CD4-positive, alpha-beta memory T cell (primary cell): ENCODE measurements at regions of chr9 and their contacts with region 1.

Region 1: DNA sequence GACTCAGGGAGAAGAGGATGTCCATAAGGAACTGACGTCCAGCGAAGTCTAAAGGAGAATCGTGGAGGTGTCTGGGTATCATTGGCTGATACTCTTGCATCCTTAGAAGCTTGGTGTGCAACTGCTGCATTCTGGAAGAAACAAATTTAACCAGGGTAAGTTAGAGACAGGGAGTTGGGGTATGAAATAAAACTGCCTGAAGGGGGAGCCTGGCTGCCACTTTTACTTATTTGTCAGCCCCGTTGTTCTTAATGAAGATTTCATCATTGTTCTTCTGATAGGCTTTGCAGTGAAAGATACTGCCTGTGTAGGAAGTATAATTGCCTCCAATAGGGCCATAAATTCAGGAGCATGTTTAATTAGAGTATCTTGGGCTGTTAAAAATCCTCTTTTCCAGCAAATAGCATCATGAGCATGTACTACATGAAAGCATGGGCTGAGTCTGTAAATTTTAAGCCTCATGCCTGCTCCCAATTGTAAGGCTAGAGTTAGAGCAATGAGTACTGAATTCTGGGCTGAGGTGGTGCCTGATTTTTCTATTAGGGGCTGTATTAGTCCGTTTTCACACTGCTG is 1264.5 kb upstream of the ACO1 start:
- DNase-seq: peak; percentile 40 to 62 (median 56)
- H3K4me3 ChIP-seq: no peak overlapping the region
- H3K4me3 Mint-ChIP-seq: no peak overlapping the region
- H3K27ac ChIP-seq: no peak overlapping the region
- H3K27ac Mint-ChIP-seq: peak overlapping the region in 2 of 7 donors; percentile 35 to 61
- H3K4me1 ChIP-seq: no peaks in the 10 kb centered on the region
- H3K4me1 Mint-ChIP-seq: peaks cover 5 to 13% (median 9%) of the 10 kb centered on the region in 4 donors
- H3K27me3 ChIP-seq: no peaks in the 10 kb centered on the region
- H3K27me3 Mint-ChIP-seq: no peaks in the 10 kb centered on the region

Region 2: DNA sequence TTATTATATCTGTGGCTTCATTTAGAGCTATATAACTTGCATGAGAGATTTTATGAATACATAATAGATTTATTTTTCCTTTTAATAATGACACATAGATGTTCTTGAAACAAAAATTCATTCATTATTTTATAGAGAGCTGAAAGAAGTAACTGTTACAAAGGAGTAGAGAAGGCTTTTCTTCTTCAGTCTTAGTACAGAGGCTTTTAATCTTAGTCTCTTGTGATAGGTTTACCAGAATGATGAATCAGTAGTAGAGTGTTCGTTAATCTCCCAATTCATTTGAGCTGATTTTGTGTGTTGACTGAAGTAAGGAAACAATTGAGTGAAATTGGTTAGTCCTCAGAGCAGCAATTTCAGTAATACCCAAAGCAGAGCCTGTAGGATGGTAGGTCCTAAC is 19.7 kb before region 1 on chr9:
- CTCF ChIA-PET with region 1: no interaction called
- POLR2A ChIA-PET with region 1: no interaction called
- intact Hi-C with region 1: no loop called
- DNase-seq: no peak
- H3K4me3 ChIP-seq: no peak overlapping the region
- H3K4me3 Mint-ChIP-seq: no peak overlapping the region
- H3K27ac ChIP-seq: no peak overlapping the region
- H3K27ac Mint-ChIP-seq: no peak overlapping the region
- H3K4me1 ChIP-seq: no peaks in the 10 kb centered on the region
- H3K4me1 Mint-ChIP-seq: peaks cover 0 to 1% (median 0%) of the 10 kb centered on the region in 4 donors
- H3K27me3 ChIP-seq: no peaks in the 10 kb centered on the region
- H3K27me3 Mint-ChIP-seq: peaks cover 0 to 1% of the 10 kb centered on the region in 2 donors

Region 3: DNA sequence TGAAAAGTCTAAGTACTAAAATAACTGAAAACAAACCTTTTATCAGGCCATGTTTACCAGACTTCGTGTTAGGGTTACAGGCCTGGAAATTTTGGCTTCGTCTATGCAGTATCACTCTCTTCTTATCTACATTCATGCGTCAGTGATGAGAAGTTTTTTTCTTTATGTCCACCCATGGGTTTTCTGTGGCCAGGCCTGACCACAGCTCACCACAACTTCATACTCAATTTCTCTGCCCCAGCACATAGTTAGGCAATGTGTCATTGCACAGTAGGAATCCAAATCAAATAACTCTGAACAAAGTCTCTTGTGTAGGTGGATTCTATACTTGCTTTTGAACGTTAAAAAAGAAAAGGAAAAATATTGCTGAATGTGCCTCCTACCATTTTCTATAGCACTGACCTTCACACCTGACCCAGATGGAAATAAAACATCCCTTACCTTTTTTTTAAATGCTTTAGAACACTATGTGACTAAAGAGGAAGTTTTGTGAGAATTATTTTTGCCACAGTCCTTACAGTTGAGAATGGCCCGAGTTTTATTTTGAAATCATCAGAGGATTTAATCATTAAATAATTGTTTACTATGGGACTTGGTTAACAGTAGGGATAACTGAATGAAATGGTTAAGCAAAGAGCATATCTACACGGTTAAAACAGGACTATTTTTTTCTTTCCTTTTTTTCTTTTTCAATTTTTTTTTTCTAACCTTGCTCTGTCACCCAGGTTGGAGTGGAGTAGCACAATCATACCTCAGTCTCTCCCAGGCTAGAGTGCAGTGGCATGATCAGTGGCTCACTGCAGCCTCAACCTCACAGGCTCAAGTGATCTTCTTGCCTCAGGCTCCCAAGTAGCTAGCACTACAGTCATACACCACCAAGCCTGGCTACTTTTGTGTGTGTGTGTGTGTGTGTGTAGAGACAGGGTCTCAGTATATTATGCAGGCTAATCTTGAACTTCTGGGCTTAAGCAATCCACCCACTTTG is 17.5 kb after region 1 on chr9:
- CTCF ChIA-PET with region 1: no interaction called
- POLR2A ChIA-PET with region 1: no interaction called
- intact Hi-C with region 1: no loop called
- DNase-seq: no peak
- H3K4me3 ChIP-seq: no peak overlapping the region
- H3K4me3 Mint-ChIP-seq: no peak overlapping the region
- H3K27ac ChIP-seq: no peak overlapping the region
- H3K27ac Mint-ChIP-seq: no peak overlapping the region
- H3K4me1 ChIP-seq: no peaks in the 10 kb centered on the region
- H3K4me1 Mint-ChIP-seq: peaks cover 0 to 9% (median 8%) of the 10 kb centered on the region in 4 donors
- H3K27me3 ChIP-seq: no peaks in the 10 kb centered on the region
- H3K27me3 Mint-ChIP-seq: no peaks in the 10 kb centered on the region

Region 4: GRCh38 chr9:31304576-31304975 is 184.6 kb after region 1 on chr9:
- CTCF ChIA-PET with region 1: interaction called, 18 read pairs
- POLR2A ChIA-PET with region 1: no interaction called
- intact Hi-C with region 1: loop called (anchors 1 kb)
- DNase-seq: no peak
- H3K4me3 ChIP-seq: no peak overlapping the region
- H3K4me3 Mint-ChIP-seq: no peak overlapping the region
- H3K27ac ChIP-seq: no peak overlapping the region
- H3K27ac Mint-ChIP-seq: no peak overlapping the region
- H3K4me1 ChIP-seq: peaks cover 25% of the 10 kb centered on the region
- H3K4me1 Mint-ChIP-seq: peaks cover 21 to 32% (median 26%) of the 10 kb centered on the region in 4 donors
- H3K27me3 ChIP-seq: no peaks in the 10 kb centered on the region
- H3K27me3 Mint-ChIP-seq: no peaks in the 10 kb centered on the region

Region 5: GRCh38 chr9:31542384-31543055 is 422.6 kb after region 1 on chr9:
- CTCF ChIA-PET with region 1: interaction called, 32 read pairs
- POLR2A ChIA-PET with region 1: no interaction called
- intact Hi-C with region 1: loop called (anchors 1 kb)
- DNase-seq: peak; percentile 36 to 46 (median 40)
- H3K4me3 ChIP-seq: no peak overlapping the region
- H3K4me3 Mint-ChIP-seq: peak overlapping the region in 7 of 8 donors; percentile 32 to 72 (median 52)
- H3K27ac ChIP-seq: no peak overlapping the region
- H3K27ac Mint-ChIP-seq: peak overlapping the region in 5 of 7 donors; percentile 3 to 89 (median 88)
- H3K4me1 ChIP-seq: peaks cover 19% of the 10 kb centered on the region
- H3K4me1 Mint-ChIP-seq: peaks cover 17 to 22% (median 19%) of the 10 kb centered on the region in 4 donors
- H3K27me3 ChIP-seq: no peaks in the 10 kb centered on the region
- H3K27me3 Mint-ChIP-seq: no peaks in the 10 kb centered on the region

Region 6: GRCh38 chr9:31799953-31800609 is 680.1 kb after region 1 on chr9:
- CTCF ChIA-PET with region 1: interaction called, 23 read pairs
- POLR2A ChIA-PET with region 1: no interaction called
- intact Hi-C with region 1: loop called (anchors 1 kb)
- DNase-seq: peak in 3 of 5 donors; percentile 17 to 26 (median 21)
- H3K4me3 ChIP-seq: no peak overlapping the region
- H3K4me3 Mint-ChIP-seq: no peak overlapping the region
- H3K27ac ChIP-seq: no peak overlapping the region
- H3K27ac Mint-ChIP-seq: no peak overlapping the region
- H3K4me1 ChIP-seq: no peaks in the 10 kb centered on the region
- H3K4me1 Mint-ChIP-seq: peaks cover 9 to 17% (median 12%) of the 10 kb centered on the region in 4 donors
- H3K27me3 ChIP-seq: no peaks in the 10 kb centered on the region
- H3K27me3 Mint-ChIP-seq: peaks cover 0 to 2% of the 10 kb centered on the region in 2 donors

Region 7: GRCh38 chr9:31996322-31996721 is 876.4 kb after region 1 on chr9:
- CTCF ChIA-PET with region 1: interaction called, 5 read pairs
- POLR2A ChIA-PET with region 1: no interaction called
- intact Hi-C with region 1: loop called (anchors 5 kb)
- DNase-seq: no peak
- H3K4me3 ChIP-seq: no peak overlapping the region
- H3K4me3 Mint-ChIP-seq: no peak overlapping the region
- H3K27ac ChIP-seq: no peak overlapping the region
- H3K27ac Mint-ChIP-seq: no peak overlapping the region
- H3K4me1 ChIP-seq: no peaks in the 10 kb centered on the region
- H3K4me1 Mint-ChIP-seq: peaks cover 0 to 3% (median under 1%) of the 10 kb centered on the region in 4 donors
- H3K27me3 ChIP-seq: no peaks in the 10 kb centered on the region
- H3K27me3 Mint-ChIP-seq: no peaks in the 10 kb centered on the region

Region 8: DNA sequence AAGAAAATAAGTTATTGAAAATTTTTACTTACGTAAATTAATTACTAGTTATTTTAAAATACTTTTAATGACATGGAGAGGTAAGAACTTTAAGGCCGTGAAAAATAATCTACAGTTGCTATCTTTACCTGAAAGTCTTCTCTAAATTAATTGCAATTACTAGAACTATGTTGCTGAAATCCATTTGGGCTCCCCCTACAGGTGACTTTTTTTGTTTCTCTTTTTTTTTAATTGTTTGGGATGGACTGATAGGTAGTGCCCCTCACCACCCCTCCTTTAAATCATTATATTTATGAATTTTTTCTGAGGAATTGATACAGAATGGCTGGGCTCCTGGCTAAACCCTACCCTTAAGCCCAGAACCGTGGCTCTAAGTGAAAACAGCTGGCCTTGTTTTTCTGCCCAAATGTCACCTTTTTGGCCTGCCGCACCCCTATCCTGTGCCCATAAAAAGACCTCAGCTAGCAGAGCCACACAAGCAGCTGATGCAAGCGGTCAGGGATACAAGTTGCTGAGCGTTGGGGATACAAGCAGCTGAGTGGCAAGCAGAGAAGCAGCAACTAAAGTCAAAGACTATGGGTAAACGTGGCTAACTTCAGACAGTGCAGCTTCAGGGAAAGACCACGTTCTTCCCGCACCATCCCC is 949.3 kb after region 1 on chr9:
- CTCF ChIA-PET with region 1: no interaction called
- POLR2A ChIA-PET with region 1: no interaction called
- intact Hi-C with region 1: loop called (anchors 5 kb)
- DNase-seq: no peak
- H3K4me3 ChIP-seq: no peak overlapping the region
- H3K4me3 Mint-ChIP-seq: no peak overlapping the region
- H3K27ac ChIP-seq: no peak overlapping the region
- H3K27ac Mint-ChIP-seq: no peak overlapping the region
- H3K4me1 ChIP-seq: no peaks in the 10 kb centered on the region
- H3K4me1 Mint-ChIP-seq: no peaks in the 10 kb centered on the region
- H3K27me3 ChIP-seq: no peaks in the 10 kb centered on the region
- H3K27me3 Mint-ChIP-seq: no peaks in the 10 kb centered on the region

Region 9: DNA sequence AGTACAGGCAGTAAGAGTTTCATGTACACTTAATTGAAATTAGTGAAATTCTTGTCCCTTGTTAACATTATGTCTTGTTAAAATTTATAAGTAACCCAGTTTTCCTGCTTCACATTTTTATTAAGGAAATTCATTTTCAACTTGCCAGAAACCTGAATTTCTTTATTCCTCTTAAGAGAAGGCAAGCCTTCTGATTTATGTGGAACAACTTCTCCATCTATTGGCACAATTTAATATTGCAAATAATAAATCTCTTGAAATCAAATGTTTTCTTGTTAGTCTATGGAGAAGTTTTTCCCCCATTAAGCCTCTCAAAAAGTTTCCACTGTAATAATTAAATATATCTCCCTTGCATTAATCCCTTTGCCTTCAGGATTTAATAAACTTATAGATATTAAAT is 1230.7 kb after region 1 on chr9:
- CTCF ChIA-PET with region 1: no interaction called
- POLR2A ChIA-PET with region 1: no interaction called
- intact Hi-C with region 1: loop called (anchors 1 kb)
- DNase-seq: peak in 4 of 5 donors; percentile 4 to 20 (median 12)
- H3K4me3 ChIP-seq: no peak overlapping the region
- H3K4me3 Mint-ChIP-seq: no peak overlapping the region
- H3K27ac ChIP-seq: no peak overlapping the region
- H3K27ac Mint-ChIP-seq: no peak overlapping the region
- H3K4me1 ChIP-seq: no peaks in the 10 kb centered on the region
- H3K4me1 Mint-ChIP-seq: no peaks in the 10 kb centered on the region
- H3K27me3 ChIP-seq: no peaks in the 10 kb centered on the region
- H3K27me3 Mint-ChIP-seq: peaks cover 0 to 3% of the 10 kb centered on the region in 2 donors